B cell (primary cell): ENCODE measurements at regions of chr7 and their contacts with region 1.

Region 1: GRCh38 chr7:97064967-97065587 is 40.4 kb upstream of the DLX5 start:
- DNase-seq: peak; percentile 56
- ATAC-seq: peak; percentile 57
- H3K4me3 ChIP-seq: no peak overlapping the region
- H3K4me3 Mint-ChIP-seq: no peak overlapping the region
- H3K27ac ChIP-seq: no peak overlapping the region
- H3K27ac Mint-ChIP-seq: no peak overlapping the region
- H3K4me1 ChIP-seq: no peaks in the 10 kb centered on the region
- H3K4me1 Mint-ChIP-seq: no peaks in the 10 kb centered on the region
- H3K27me3 ChIP-seq: no peaks in the 10 kb centered on the region
- H3K27me3 Mint-ChIP-seq: peaks cover 13% of the 10 kb centered on the region
- CTCF ChIP-seq: peak; percentile 82

Region 2: DNA sequence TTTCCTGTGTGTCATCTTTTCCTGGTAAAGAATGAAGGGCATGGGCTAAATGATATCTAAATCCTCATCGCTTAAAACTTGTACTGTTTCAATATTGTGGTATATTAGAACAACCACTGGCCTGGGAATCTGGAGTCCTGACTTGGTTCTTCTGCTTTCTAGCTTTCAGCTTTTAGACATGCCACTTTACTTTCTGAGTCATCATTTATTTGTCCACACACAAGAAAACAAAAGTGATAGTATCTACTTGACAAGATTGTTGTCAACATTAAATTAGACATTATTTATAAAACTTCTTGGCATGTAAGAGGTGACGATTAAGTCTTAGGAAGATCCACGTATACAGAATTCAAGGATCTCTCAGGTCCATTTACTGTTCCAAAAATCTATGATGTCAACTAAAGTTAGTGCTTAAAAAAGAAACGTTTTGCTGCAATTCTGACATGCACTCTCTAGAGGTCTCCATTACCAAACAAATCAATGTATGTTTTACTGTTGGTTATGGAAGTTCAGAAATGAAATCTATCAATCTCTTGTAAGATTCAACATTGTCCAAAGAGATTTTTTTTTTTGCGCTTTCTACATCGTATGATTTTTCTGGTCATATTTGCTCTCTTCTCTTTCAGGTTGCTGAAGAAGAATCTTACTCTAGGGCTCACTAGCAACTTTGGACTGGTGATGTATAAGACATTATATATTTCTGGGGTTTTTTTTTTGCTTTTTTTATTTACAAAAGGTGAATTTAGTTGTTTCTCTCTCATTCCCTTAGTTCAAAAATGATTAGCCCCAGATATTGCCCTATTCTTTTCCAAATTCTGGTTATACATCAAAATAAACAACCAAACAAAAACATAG is 1346.3 kb before region 1 on chr7:
- CTCF ChIA-PET with region 1: no interaction called
- POLR2A ChIA-PET with region 1: no interaction called
- intact Hi-C with region 1: loop called (anchors 10 kb)
- DNase-seq: no peak
- ATAC-seq: no peak
- H3K4me3 ChIP-seq: no peak overlapping the region
- H3K4me3 Mint-ChIP-seq: no peak overlapping the region
- H3K27ac ChIP-seq: no peak overlapping the region
- H3K27ac Mint-ChIP-seq: no peak overlapping the region
- H3K4me1 ChIP-seq: peaks cover 0 to 8% of the 10 kb centered on the region in 2 donors
- H3K4me1 Mint-ChIP-seq: peaks cover 13% of the 10 kb centered on the region
- H3K27me3 ChIP-seq: peaks cover 0 to 9% (median 3%) of the 10 kb centered on the region in 4 experiments
- H3K27me3 Mint-ChIP-seq: peaks cover 19% of the 10 kb centered on the region
- CTCF ChIP-seq: no peak

Region 3: GRCh38 chr7:96075510-96076349 is 989.3 kb before region 1 on chr7:
- CTCF ChIA-PET with region 1: interaction called, 10 read pairs
- POLR2A ChIA-PET with region 1: no interaction called
- intact Hi-C with region 1: no loop called
- DNase-seq: peak; percentile 65
- ATAC-seq: peak; percentile 79
- H3K4me3 ChIP-seq: peak overlapping the region in 4 of 5 experiments; percentile 18 to 56 (median 47)
- H3K4me3 Mint-ChIP-seq: peak overlapping the region; percentile 92
- H3K27ac ChIP-seq: no peak overlapping the region
- H3K27ac Mint-ChIP-seq: no peak overlapping the region
- H3K4me1 ChIP-seq: peaks cover 9% of the 10 kb centered on the region in 2 donors
- H3K4me1 Mint-ChIP-seq: peaks cover 6% of the 10 kb centered on the region
- H3K27me3 ChIP-seq: peaks cover 0 to 32% (median 23%) of the 10 kb centered on the region in 4 experiments
- H3K27me3 Mint-ChIP-seq: peaks cover 40% of the 10 kb centered on the region
- CTCF ChIP-seq: peak; percentile 81

Region 4: GRCh38 chr7:97075928-97076327 is 10.9 kb after region 1 on chr7:
- CTCF ChIA-PET with region 1: interaction called, 14 read pairs
- POLR2A ChIA-PET with region 1: no interaction called
- intact Hi-C with region 1: no loop called
- DNase-seq: no peak
- ATAC-seq: no peak
- H3K4me3 ChIP-seq: no peak overlapping the region
- H3K4me3 Mint-ChIP-seq: no peak overlapping the region
- H3K27ac ChIP-seq: no peak overlapping the region
- H3K27ac Mint-ChIP-seq: no peak overlapping the region
- H3K4me1 ChIP-seq: peaks cover 5 to 6% of the 10 kb centered on the region in 2 donors
- H3K4me1 Mint-ChIP-seq: peaks cover 23% of the 10 kb centered on the region
- H3K27me3 ChIP-seq: no peaks in the 10 kb centered on the region
- H3K27me3 Mint-ChIP-seq: peaks cover 12% of the 10 kb centered on the region
- CTCF ChIP-seq: no peak